Mammary epithelial cell (primary cell): ENCODE measurements at regions of chr17 and their contacts with region 1.

Region 1: GRCh38 chr17:81871387-81872230 is 472 bp upstream of the ARHGDIA start:
- DNase-seq: peak; percentile 82
- H3K4me3 ChIP-seq: peak overlapping the region; percentile 64 to 88 (median 75)
- H3K27ac ChIP-seq: peak overlapping the region; percentile 86
- H3K4me1 ChIP-seq: peaks cover 33% of the 10 kb centered on the region
- H3K27me3 ChIP-seq: no peaks in the 10 kb centered on the region
- CTCF ChIP-seq: peak in 1 of 2 donors; percentile 42

Region 2: DNA sequence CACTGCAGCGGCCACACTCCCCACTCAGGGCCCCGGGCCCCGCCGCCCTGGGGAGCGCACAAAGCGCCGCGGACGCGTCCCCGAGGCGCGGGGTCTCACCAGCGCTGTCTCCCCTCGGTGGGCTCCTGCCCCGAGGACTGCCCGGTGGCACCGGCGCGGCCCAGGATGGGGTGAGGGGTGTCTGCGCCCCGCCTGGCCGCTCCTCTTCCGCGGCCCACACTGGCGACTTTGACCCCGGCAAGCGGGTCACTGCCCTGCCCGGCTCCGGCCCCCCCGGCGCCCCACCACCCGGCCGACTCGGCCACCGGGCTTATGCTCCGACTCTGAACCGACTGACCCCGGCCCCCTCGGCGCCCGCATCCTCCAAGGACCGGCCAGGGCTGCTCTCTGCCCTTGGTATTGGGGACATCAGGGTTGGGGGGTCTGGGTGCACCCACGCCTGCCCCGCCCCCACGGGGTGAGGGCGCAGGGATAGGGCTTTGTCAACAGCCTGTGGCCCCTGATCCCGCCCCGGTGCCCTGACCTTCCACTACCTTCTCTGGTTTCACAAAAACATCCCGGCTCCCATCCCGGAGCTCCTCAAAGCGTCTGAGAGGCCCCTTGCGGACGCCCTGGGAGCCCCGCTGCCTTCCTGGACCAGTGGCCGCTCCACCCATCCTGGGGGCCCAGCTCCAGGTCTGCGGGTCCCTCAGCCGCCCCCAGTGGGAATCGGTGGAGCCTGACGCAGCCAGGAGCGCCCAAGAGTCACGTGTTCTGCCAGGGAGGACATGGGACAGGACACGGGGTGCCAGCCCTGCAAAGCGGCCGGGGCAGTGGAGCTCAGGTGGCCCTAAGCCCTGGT is 66.8 kb before region 1 on chr17:
- CTCF ChIA-PET with region 1: no interaction called
- dilution Hi-C with region 1: no loop called
- in situ Hi-C with region 1: no loop called
- intact Hi-C with region 1: no loop called
- DNase-seq: no peak
- H3K4me3 ChIP-seq: no peak overlapping the region
- H3K27ac ChIP-seq: no peak overlapping the region
- H3K4me1 ChIP-seq: no peaks in the 10 kb centered on the region
- H3K27me3 ChIP-seq: peaks cover 32% of the 10 kb centered on the region
- CTCF ChIP-seq: no peak

Region 3: GRCh38 chr17:81890447-81891299 is 19.1 kb after region 1 on chr17:
- CTCF ChIA-PET with region 1: no interaction called
- dilution Hi-C with region 1: no loop called
- in situ Hi-C with region 1: no loop called
- intact Hi-C with region 1: loop called (anchors 2 kb)
- DNase-seq: no peak
- H3K4me3 ChIP-seq: peak overlapping the region; percentile 80 to 88 (median 87)
- H3K27ac ChIP-seq: peak overlapping the region; percentile 77
- H3K4me1 ChIP-seq: peaks cover 21% of the 10 kb centered on the region
- H3K27me3 ChIP-seq: no peaks in the 10 kb centered on the region
- CTCF ChIP-seq: no peak

Region 4: GRCh38 chr17:81917565-81918332 is 46.1 kb after region 1 on chr17 and contains the start of gene SIRT7:
- CTCF ChIA-PET with region 1: no interaction called
- dilution Hi-C with region 1: no loop called
- in situ Hi-C with region 1: no loop called
- intact Hi-C with region 1: loop called (anchors 2 kb)
- DNase-seq: peak; percentile 63
- H3K4me3 ChIP-seq: peak within 1 kb of the TSS; percentile 39 to 84 (median 78)
- H3K27ac ChIP-seq: peak within 1 kb of the TSS; percentile 8
- H3K4me1 ChIP-seq: peaks cover 9% of the 10 kb centered on the region
- H3K27me3 ChIP-seq: no peaks in the 10 kb centered on the region
- CTCF ChIP-seq: no peak
- total RNA-seq, gene SIRT7: 15.5 to 28.1 TPM

Region 5: GRCh38 chr17:82332669-82333278 is 461.2 kb after region 1 on chr17:
- CTCF ChIA-PET with region 1: no interaction called
- dilution Hi-C with region 1: no loop called
- in situ Hi-C with region 1: no loop called
- intact Hi-C with region 1: no loop called
- DNase-seq: peak; percentile 46
- H3K4me3 ChIP-seq: peak overlapping the region in 2 of 3 experiments; percentile 18 to 46
- H3K27ac ChIP-seq: no peak overlapping the region
- H3K4me1 ChIP-seq: peaks cover 46% of the 10 kb centered on the region
- H3K27me3 ChIP-seq: no peaks in the 10 kb centered on the region
- CTCF ChIP-seq: no peak